K562 (cell line): ENCODE measurements at regions of chr1 and their contacts with region 1.

Region 1: DNA sequence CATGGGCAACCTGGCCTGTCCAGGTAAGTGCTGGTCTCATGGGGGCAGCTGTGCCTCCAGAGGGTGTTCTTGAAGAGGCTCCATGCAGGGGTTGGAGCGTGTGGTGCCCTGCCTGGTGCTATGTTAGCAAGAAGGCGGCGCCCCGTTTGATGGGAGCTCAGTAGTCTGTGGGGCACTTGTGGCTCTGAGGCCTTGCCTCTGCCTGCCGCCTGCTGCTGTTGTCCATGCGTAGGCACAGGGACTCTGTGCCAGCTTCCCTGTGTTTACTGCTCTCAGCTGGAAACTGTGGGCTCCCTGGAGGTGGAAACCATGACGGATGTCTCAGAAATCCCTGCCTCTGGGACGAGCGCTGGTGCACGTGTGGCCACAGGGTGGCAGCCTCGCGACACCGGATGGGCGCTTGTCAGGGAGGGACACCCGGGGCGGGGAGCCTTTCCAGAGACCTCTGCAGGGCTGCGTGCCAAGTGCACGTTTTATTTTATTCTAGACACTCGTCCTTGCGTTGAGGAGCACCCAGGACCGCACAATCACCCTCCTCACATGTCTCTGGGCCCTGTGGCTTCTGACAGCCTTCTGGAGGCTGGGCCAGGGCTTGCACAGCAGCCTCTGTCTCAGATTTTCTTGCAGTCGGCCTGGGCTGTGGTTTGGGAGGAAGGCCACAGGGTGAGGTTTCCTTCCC is 27.1 kb downstream of the SNAP47 start:
- DNase-seq: peak; percentile 90 to 97 (median 97)
- ATAC-seq: peak; percentile 100
- H3K4me3 ChIP-seq: no peak overlapping the region
- H3K27ac ChIP-seq: no peak overlapping the region
- H3K4me1 ChIP-seq: peaks cover 5 to 20% of the 10 kb centered on the region in 2 experiments
- H3K27me3 ChIP-seq: no peaks in the 10 kb centered on the region
- CTCF ChIP-seq: peak; percentile 98
- EP300 ChIP-seq: no peak
- POLR2A ChIP-seq: no peak
- RAD21 ChIP-seq: peak; percentile 94 to 96

Region 2: GRCh38 chr1:227482023-227482299 is 280.4 kb before region 1 on chr1:
- CTCF ChIA-PET with region 1: interaction called, 10 read pairs
- POLR2A ChIA-PET with region 1: interaction called, 3 read pairs
- in situ Hi-C with region 1: no loop called
- intact Hi-C with region 1: loop called (anchors 1 kb)
- DNase-seq: no peak
- ATAC-seq: no peak
- H3K4me3 ChIP-seq: no peak overlapping the region
- H3K27ac ChIP-seq: no peak overlapping the region
- H3K4me1 ChIP-seq: no peaks in the 10 kb centered on the region
- H3K27me3 ChIP-seq: no peaks in the 10 kb centered on the region
- CTCF ChIP-seq: no peak
- EP300 ChIP-seq: no peak
- POLR2A ChIP-seq: no peak
- RAD21 ChIP-seq: no peak

Region 3: DNA sequence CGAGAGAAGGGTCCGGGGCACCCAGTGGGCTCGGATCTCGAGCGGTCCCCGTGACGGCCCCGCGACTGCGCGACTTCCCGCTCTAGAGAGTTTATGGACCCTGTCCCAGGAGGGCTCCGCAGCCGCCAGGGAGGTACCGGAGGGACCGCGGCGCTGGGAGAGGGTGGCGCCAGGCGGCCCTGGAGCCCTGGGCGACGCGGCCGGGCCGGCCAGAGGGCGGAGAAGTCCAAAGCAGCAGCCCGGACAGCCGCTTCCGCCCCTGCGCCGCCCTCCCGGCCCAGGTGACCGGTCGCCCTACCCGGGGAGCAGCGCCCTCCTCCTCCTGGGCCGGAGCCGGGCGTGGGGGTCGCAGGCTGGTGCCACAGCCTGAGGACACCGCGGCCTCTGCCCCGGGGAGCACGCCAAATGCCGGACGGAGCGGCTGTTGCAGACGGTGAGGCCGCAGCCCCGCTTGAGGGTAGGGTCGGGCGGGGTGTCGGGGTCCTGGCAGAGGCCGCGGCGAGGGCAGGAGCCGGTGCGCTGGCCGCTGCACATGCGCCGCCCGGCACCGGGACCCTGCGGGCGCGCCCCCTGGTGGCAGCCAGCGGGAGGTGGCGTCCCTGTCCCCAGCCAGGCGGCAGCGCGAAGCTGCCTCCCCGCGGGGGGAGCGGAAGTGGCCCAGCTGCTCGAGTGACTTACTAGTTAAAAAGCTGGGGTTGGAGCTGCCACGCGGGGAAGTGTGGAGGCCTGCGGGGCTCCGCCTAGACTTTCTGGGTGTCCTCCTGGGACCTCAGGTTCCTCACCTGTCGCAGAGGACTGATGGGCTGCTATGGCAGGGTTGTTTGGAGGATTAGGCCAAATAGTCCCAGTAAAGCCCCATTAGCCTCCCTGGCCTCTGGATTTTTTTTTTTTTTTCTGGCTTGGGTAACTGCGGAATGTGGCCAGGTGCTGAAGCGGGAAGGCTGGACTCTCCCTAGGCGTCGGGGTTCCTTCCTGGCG is 219.9 kb before region 1 on chr1:
- CTCF ChIA-PET with region 1: no interaction called
- POLR2A ChIA-PET with region 1: no interaction called
- in situ Hi-C with region 1: no loop called
- intact Hi-C with region 1: no loop called
- DNase-seq: peak; percentile 21 to 46 (median 33)
- ATAC-seq: peak; percentile 78
- H3K4me3 ChIP-seq: no peak overlapping the region
- H3K27ac ChIP-seq: no peak overlapping the region
- H3K4me1 ChIP-seq: peaks cover 0 to 12% of the 10 kb centered on the region in 2 experiments; a peak in 1 of 5 replicates
- H3K27me3 ChIP-seq: no peaks in the 10 kb centered on the region
- CTCF ChIP-seq: peak; percentile 27 to 71 (median 43); a peak in 4 of 6 replicates
- EP300 ChIP-seq: no peak
- POLR2A ChIP-seq: no peak
- RAD21 ChIP-seq: peak in 1 of 2 experiments; percentile 42; a peak in 2 of 4 replicates

Region 4: GRCh38 chr1:227934476-227935313 is 172.3 kb after region 1 on chr1:
- CTCF ChIA-PET with region 1: no interaction called
- POLR2A ChIA-PET with region 1: no interaction called
- in situ Hi-C with region 1: loop called (anchors 10 kb)
- intact Hi-C with region 1: no loop called
- DNase-seq: peak in 3 of 4 experiments; percentile 28 to 50 (median 43)
- ATAC-seq: peak; percentile 58
- H3K4me3 ChIP-seq: no peak overlapping the region
- H3K27ac ChIP-seq: no peak overlapping the region
- H3K4me1 ChIP-seq: peaks cover 0 to 17% of the 10 kb centered on the region in 2 experiments; a peak in 2 of 5 replicates
- H3K27me3 ChIP-seq: peaks cover 55 to 71% of the 10 kb centered on the region in 2 experiments; a peak in 4 of 5 replicates
- CTCF ChIP-seq: no peak
- EP300 ChIP-seq: no peak
- POLR2A ChIP-seq: no peak
- RAD21 ChIP-seq: no peak

Region 5: DNA sequence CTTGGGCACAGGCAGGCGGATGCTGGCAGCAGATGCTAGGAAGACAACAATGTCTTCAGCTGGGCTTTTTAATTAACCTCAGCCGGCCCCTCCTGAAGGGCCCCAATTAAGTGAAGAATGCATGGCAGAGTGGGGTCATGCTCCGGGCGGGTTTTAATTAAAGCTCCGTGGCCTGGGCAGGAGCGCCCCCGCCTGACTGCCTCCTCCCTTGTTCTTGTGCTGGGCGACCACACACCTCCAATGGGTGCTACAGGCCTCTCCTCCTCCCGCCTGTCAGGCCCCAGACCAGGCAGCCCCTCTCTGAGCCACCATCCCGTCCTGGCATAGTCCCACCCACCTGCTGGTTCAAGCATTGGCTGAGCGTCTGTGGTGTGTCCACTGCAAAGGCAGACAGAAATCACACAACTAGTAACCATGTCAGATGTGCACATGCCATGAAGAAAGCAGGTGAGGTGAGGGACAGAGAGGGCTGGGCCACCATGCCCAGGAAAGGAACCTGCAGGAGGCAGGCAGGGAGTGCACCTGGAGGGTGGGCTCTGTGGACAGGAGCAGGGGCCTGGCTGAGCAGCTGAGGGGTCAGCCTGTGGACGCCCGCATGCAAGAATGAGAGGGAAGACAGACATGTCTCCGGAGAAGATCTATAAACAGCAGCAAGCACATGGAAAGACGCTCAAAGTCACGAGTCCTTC is 311.6 kb after region 1 on chr1:
- CTCF ChIA-PET with region 1: no interaction called
- POLR2A ChIA-PET with region 1: no interaction called
- in situ Hi-C with region 1: no loop called
- intact Hi-C with region 1: loop called (anchors 5 kb)
- DNase-seq: peak; percentile 61 to 69 (median 62)
- ATAC-seq: peak; percentile 77
- H3K4me3 ChIP-seq: no peak overlapping the region
- H3K27ac ChIP-seq: no peak overlapping the region
- H3K4me1 ChIP-seq: peaks cover 0 to 29% of the 10 kb centered on the region in 2 experiments; a peak in 2 of 5 replicates
- H3K27me3 ChIP-seq: peaks cover 0 to 24% of the 10 kb centered on the region in 2 experiments; a peak in 3 of 5 replicates
- CTCF ChIP-seq: peak; percentile 69 to 77 (median 72)
- EP300 ChIP-seq: no peak
- POLR2A ChIP-seq: no peak
- RAD21 ChIP-seq: peak; percentile 38 to 71; a peak in 3 of 4 replicates